ENCODE measurements at regions of chr22 and their contacts with region 1.

Region 1: DNA sequence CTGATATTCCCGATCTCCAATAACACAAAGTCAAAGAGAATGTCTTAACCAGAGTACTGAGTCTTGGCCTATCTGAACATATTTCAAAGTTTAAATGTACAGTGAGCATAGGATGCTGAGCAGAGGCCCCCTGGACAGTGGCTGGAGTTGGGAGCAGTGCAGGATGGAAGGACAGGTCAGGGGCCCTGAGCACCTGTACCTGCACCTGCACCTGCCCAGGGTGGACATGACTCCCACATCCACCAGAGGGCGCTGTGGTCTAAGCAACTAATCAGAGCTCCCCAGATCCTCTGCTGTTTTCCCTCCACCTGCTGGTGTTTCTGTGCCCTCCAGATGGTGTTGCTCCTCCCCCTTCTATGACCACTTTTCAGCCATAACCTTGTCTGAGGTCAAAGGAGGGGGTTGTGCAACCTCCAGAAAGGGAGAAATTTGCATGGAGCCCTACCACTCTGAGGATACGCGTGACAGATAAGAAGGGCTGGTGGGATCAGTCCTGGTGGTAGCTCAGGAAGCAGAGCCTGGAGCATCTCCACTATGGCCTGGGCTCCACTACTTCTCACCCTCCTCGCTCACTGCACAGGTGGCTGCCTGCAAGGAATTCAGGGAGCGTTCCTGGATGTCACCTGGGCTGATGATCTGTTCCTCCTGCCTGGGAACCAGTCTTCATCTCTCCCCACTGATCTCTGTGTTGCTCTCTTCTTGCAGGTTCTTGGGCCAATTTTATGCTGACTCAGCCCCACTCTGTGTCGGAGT is 49.1 kb upstream of the VPREB1 start:
- DNase-seq: peak; percentile 65

Region 2: DNA sequence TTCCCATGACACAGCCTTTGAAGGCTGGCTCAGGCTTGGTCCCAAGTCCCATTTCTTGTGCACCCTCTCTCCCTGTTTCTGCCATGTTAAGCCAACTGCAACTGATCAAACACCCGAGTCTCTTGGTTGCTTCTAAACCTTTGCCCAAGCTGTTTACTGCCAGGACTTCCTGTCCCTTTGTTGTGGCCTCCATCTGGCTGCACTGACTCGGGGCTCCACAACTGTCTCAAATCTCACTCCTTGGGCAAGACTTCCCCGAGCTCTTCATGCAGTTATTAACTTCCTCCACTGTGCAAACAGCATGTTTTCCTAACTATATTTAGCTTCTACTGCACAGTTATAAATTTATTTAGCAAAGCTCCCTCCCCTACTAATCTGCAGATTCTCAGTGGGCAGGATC is 53.4 kb after region 1 on chr22:
- in situ Hi-C with region 1: loop called (anchors 10 kb)
- DNase-seq: no peak

Measured in G401 (cell line).